ENCODE measurements at regions of chr3 and their contacts with region 1.

Region 1: GRCh38 chr3:49906004-49906743 is 2.5 kb upstream of the MST1R start:
- DNase-seq: peak; percentile 68
- ATAC-seq: peak; percentile 14
- H3K4me3 Mint-ChIP-seq: peak overlapping the region; percentile 32
- H3K27ac Mint-ChIP-seq: peak overlapping the region; percentile 73
- H3K4me1 Mint-ChIP-seq: peaks cover 47% of the 10 kb centered on the region
- H3K27me3 Mint-ChIP-seq: peaks cover 11% of the 10 kb centered on the region
- CTCF ChIP-seq: peak; percentile 36

Region 2: GRCh38 chr3:49683162-49683561 is 223.0 kb before region 1 on chr3:
- CTCF ChIA-PET with region 1: no interaction called
- POLR2A ChIA-PET with region 1: no interaction called
- DNase-seq: no peak
- ATAC-seq: no peak
- H3K4me3 Mint-ChIP-seq: no peak overlapping the region
- H3K27ac Mint-ChIP-seq: no peak overlapping the region
- H3K4me1 Mint-ChIP-seq: peaks cover 8% of the 10 kb centered on the region
- H3K27me3 Mint-ChIP-seq: no peaks in the 10 kb centered on the region
- CTCF ChIP-seq: no peak

Region 3: GRCh38 chr3:49703443-49703927 is 202.7 kb before region 1 on chr3:
- CTCF ChIA-PET with region 1: interaction called, 13 read pairs
- POLR2A ChIA-PET with region 1: interaction called, 3 read pairs
- DNase-seq: peak; percentile 75
- ATAC-seq: peak; percentile 91
- H3K4me3 Mint-ChIP-seq: no peak overlapping the region
- H3K27ac Mint-ChIP-seq: no peak overlapping the region; the same call in 1 of the 2 replicates
- H3K4me1 Mint-ChIP-seq: peaks cover 16% of the 10 kb centered on the region
- H3K27me3 Mint-ChIP-seq: no peaks in the 10 kb centered on the region
- CTCF ChIP-seq: peak; percentile 70

Region 4: DNA sequence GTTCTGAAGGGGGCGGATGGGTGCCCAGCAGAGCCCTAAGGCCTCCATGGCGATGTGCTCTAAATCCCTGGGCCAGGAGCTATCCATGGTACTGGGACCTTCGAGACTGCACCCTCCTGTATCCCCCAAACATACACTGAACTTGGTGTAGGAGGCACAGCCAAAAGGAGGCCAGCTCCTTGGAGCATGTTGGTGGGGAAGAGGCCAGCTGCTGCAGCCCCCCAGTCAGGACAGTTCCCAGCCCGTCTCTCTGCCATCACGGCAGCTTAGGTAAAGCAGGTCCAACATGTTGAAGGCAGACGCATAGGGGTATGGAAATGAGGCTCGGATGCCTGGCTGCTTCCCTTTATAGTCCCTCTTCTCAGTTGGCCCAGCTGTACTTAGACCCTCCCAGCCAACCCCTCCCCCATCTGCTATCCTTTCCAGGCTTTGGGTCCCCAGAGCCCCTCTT is 38.3 kb before region 1 on chr3:
- CTCF ChIA-PET with region 1: interaction called, 20 read pairs
- POLR2A ChIA-PET with region 1: no interaction called
- DNase-seq: peak; percentile 78
- ATAC-seq: peak; percentile 56
- H3K4me3 Mint-ChIP-seq: peak overlapping the region; percentile 65
- H3K27ac Mint-ChIP-seq: peak overlapping the region; percentile 70; the same call in 1 of the 2 replicates
- H3K4me1 Mint-ChIP-seq: peaks cover 44% of the 10 kb centered on the region
- H3K27me3 Mint-ChIP-seq: peaks cover 4% of the 10 kb centered on the region
- CTCF ChIP-seq: no peak

Region 5: GRCh38 chr3:49882166-49882565 is 24.0 kb before region 1 on chr3:
- CTCF ChIA-PET with region 1: interaction called, 41 read pairs
- POLR2A ChIA-PET with region 1: interaction called, 4 read pairs
- DNase-seq: no peak
- ATAC-seq: no peak
- H3K4me3 Mint-ChIP-seq: no peak overlapping the region
- H3K27ac Mint-ChIP-seq: no peak overlapping the region; the same call in 1 of the 2 replicates
- H3K4me1 Mint-ChIP-seq: peaks cover 29% of the 10 kb centered on the region
- H3K27me3 Mint-ChIP-seq: no peaks in the 10 kb centered on the region
- CTCF ChIP-seq: no peak

Region 6: GRCh38 chr3:49929331-49930240 is 23.4 kb after region 1 on chr3 and contains the start of gene MON1A:
- CTCF ChIA-PET with region 1: interaction called, 88 read pairs
- POLR2A ChIA-PET with region 1: interaction called, 19 read pairs
- DNase-seq: peak; percentile 99
- ATAC-seq: peak; percentile 87
- H3K4me3 Mint-ChIP-seq: peak within 1 kb of the TSS; percentile 90
- H3K27ac Mint-ChIP-seq: peak within 1 kb of the TSS; percentile 98
- H3K4me1 Mint-ChIP-seq: peaks cover 25% of the 10 kb centered on the region
- H3K27me3 Mint-ChIP-seq: no peaks in the 10 kb centered on the region
- CTCF ChIP-seq: no peak
- total RNA-seq, gene MON1A: 6.6 to 8.6 TPM (median 7.0 TPM) in 3 replicates

Region 7: GRCh38 chr3:49952924-49953323 is 46.8 kb after region 1 on chr3:
- CTCF ChIA-PET with region 1: no interaction called
- POLR2A ChIA-PET with region 1: no interaction called
- DNase-seq: no peak
- ATAC-seq: no peak
- H3K4me3 Mint-ChIP-seq: no peak overlapping the region
- H3K27ac Mint-ChIP-seq: no peak overlapping the region
- H3K4me1 Mint-ChIP-seq: no peaks in the 10 kb centered on the region
- H3K27me3 Mint-ChIP-seq: no peaks in the 10 kb centered on the region
- CTCF ChIP-seq: no peak

Region 8: GRCh38 chr3:50003216-50003615 is 97.0 kb after region 1 on chr3:
- CTCF ChIA-PET with region 1: no interaction called
- POLR2A ChIA-PET with region 1: no interaction called
- DNase-seq: no peak
- ATAC-seq: no peak
- H3K4me3 Mint-ChIP-seq: no peak overlapping the region
- H3K27ac Mint-ChIP-seq: 0 out of 2 replicates have a peak overlapping the region, but pooled peaks have one; percentile 40
- H3K4me1 Mint-ChIP-seq: peaks cover 12% of the 10 kb centered on the region
- H3K27me3 Mint-ChIP-seq: no peaks in the 10 kb centered on the region
- CTCF ChIP-seq: no peak

Measured in WTC11 (cell line).